CD14-positive monocyte (primary cell): ENCODE measurements at regions of chr4 and their contacts with region 1.

Region 1: DNA sequence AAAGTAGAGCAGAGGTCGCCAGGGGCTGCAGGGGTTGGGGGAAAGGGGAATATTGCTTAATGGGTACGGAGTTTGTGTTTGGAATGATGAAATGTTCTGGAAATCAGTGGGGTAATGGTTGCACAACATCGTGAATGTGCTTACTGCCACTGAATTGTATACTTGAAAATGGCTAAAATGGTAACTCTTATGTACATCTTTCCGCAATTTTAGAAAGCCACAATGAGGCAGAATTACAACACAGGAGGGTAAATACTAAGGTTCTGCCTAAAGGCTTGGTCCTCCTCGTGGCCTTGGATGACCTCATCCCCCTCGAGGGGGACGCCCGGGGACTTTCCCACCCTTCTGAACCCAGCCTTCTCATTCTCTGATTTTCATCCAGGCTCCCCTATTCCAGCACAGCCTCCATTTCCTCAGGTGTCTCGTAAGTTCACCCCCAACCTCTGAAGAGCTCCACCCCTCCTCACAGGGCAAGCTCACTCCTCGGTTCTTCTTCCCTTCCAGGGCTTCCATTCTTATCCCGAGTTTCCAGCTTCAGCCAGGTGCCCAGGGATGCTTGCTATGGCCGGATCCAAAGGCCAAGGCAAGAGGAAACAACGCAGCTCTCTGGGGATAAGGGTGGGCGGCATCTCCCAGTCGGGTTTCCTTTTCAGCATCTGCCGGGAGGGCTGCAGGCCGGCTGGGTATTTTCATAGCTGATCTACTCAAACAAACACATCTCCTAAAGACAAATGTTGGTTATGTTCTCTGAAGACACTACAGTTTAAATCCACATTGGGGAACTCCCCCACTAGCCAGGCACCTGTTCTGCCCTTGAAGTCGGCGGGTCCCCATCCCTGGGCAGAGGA is 71.3 kb upstream of the ACSL1 start:
- DNase-seq: peak; percentile 90 to 98 (median 95)
- H3K4me3 ChIP-seq: peak overlapping the region in 1 of 3 experiments; percentile 62
- H3K4me3 Mint-ChIP-seq: peak overlapping the region; percentile 39 to 76
- H3K27ac ChIP-seq: peak overlapping the region; percentile 92 to 97
- H3K27ac Mint-ChIP-seq: peak overlapping the region; percentile 95 to 100 (median 98)
- H3K4me1 ChIP-seq: peaks cover 61 to 68% of the 10 kb centered on the region in 2 donors
- H3K4me1 Mint-ChIP-seq: peaks cover 67% of the 10 kb centered on the region
- H3K27me3 ChIP-seq: no peaks in the 10 kb centered on the region
- H3K27me3 Mint-ChIP-seq: peaks cover 0 to 2% (median 2%) of the 10 kb centered on the region in 3 donors
- CTCF ChIP-seq: no peak

Region 2: DNA sequence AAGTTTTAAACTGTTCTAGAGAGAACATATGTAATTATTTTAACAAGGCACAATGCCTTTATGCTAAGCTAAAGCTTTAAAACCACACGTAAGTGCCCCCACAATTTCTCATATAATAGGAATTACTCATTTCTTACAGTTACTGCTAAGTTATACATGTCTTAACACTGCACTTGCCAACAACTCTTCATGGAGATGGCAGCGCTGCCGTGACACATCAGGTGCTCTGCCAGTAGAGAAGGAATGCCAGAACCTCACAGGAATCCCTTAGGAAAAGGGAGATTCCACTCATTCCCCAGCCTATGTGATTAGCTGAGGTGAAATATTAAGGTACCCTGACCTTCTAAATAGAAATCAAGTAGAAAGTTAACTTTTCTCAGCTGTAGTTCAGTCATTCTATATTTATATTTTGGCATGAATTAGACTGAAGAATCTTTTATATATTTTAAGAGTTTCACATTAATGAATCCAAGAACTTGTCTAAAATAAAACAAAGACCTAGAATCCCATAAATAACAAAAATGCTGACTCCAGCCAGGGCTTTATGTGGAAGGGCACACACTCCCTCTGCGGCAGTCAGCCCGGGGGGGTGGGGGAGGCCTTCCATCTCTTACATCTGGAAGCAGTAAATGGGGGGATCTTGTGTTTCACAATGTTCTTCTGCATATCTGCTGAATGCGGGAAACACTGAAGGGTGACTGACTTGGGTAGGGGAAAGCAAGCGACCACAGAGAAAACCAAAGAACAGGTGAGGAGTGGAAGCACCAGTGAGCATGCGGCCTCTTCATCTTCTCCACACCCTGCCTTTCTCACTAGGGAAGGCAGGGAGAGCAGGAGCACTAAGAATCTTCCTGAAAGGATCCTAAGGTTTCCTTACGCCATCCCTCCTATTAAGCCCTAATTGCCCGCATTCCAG is 95.1 kb before region 1 on chr4:
- intact Hi-C with region 1: no loop called
- DNase-seq: no peak
- H3K4me3 ChIP-seq: no peak overlapping the region
- H3K4me3 Mint-ChIP-seq: no peak overlapping the region
- H3K27ac ChIP-seq: no peak overlapping the region
- H3K27ac Mint-ChIP-seq: no peak overlapping the region
- H3K4me1 ChIP-seq: peaks cover 3 to 23% of the 10 kb centered on the region in 2 donors
- H3K4me1 Mint-ChIP-seq: peaks cover 40% of the 10 kb centered on the region
- H3K27me3 ChIP-seq: no peaks in the 10 kb centered on the region
- H3K27me3 Mint-ChIP-seq: peaks cover 0 to 3% (median 0%) of the 10 kb centered on the region in 3 donors
- CTCF ChIP-seq: no peak

Region 3: GRCh38 chr4:184955651-184956050 is 58.6 kb after region 1 on chr4:
- intact Hi-C with region 1: loop called in 1 of 2 experiments (anchors 10 kb)
- DNase-seq: no peak
- H3K4me3 ChIP-seq: no peak overlapping the region
- H3K4me3 Mint-ChIP-seq: no peak overlapping the region
- H3K27ac ChIP-seq: no peak overlapping the region
- H3K27ac Mint-ChIP-seq: no peak overlapping the region
- H3K4me1 ChIP-seq: peaks cover 10 to 11% of the 10 kb centered on the region in 2 donors
- H3K4me1 Mint-ChIP-seq: peaks cover 19% of the 10 kb centered on the region
- H3K27me3 ChIP-seq: no peaks in the 10 kb centered on the region
- H3K27me3 Mint-ChIP-seq: peaks cover 3 to 11% (median 4%) of the 10 kb centered on the region in 3 donors
- CTCF ChIP-seq: no peak